ENCODE measurements at regions of chr17 and their contacts with region 1.

Region 1: GRCh38 chr17:43983515-43984411 is 20.7 kb upstream of the NAGS start:
- DNase-seq: peak; percentile 65
- ATAC-seq: peak; percentile 75
- H3K4me3 Mint-ChIP-seq: peak overlapping the region; percentile 69
- H3K27ac Mint-ChIP-seq: no peak overlapping the region
- H3K4me1 Mint-ChIP-seq: peaks cover 4% of the 10 kb centered on the region; the same call in 1 of the 2 replicates
- H3K27me3 Mint-ChIP-seq: peaks cover 24% of the 10 kb centered on the region
- CTCF ChIP-seq: peak; percentile 41; the same call in 1 of the 2 replicates

Region 2: DNA sequence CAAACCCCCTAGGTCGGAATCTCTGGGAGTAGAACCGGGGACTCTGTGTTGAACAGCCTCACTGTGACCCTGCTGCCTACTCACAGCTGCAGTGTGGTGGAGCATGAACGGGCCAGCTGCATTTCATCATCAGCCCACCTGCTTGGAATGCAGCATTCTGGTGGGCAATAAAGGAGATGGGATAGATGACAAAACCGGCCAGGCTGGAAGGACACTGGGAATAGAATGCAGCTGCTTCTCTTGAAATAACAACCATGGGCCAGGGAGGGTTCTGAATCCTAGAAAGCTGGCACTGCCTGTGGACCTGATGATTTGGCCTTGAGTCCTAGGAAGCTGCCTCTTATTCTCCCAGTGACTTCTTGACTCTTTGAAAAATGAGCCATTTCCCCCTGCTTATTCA is 180.0 kb before region 1 on chr17:
- CTCF ChIA-PET with region 1: no interaction called
- POLR2A ChIA-PET with region 1: no interaction called
- DNase-seq: peak; percentile 39
- ATAC-seq: peak; percentile 90
- H3K4me3 Mint-ChIP-seq: 0 out of 2 replicates have a peak overlapping the region, but pooled peaks have one; percentile 2
- H3K27ac Mint-ChIP-seq: peak overlapping the region; percentile 82
- H3K4me1 Mint-ChIP-seq: peaks cover 43% of the 10 kb centered on the region
- H3K27me3 Mint-ChIP-seq: no peaks in the 10 kb centered on the region
- CTCF ChIP-seq: no peak

Region 3: DNA sequence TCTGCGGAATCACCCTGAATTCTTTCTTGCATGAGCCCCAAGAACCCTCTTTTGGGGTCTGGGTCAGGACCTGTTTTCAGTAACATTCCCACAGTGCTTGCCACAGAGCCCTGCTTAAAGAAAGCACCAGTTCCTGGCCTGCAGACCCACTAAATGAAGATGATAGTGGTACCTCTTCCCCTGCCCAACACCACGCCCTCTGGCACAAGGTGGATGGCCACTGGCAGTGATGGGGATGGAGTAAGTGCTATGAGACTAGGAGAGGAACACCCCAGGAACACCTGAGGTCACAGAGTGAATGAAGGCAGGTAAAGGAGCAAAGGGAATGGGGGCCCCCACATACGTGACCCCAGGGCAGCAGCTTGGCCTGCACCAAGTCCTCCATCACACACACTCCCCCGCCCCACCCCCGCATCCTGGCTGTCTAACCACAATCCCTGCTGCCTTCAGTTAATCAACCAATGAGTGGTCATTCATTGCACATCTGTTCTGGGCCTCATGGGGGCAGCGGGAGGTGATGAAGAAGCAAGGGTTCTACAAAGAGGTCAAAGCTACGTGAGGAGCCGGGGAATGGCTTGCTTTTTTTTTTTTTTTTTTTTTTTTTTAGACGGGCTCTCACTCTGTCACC is 37.6 kb before region 1 on chr17:
- CTCF ChIA-PET with region 1: interaction called, 58 read pairs
- POLR2A ChIA-PET with region 1: interaction called, 4 read pairs
- DNase-seq: peak; percentile 66
- ATAC-seq: peak; percentile 55
- H3K4me3 Mint-ChIP-seq: no peak overlapping the region
- H3K27ac Mint-ChIP-seq: no peak overlapping the region
- H3K4me1 Mint-ChIP-seq: peaks cover 16% of the 10 kb centered on the region
- H3K27me3 Mint-ChIP-seq: peaks cover 12% of the 10 kb centered on the region
- CTCF ChIP-seq: no peak

Region 4: GRCh38 chr17:43958953-43959352 is 24.8 kb before region 1 on chr17:
- CTCF ChIA-PET with region 1: interaction called, 13 read pairs
- POLR2A ChIA-PET with region 1: interaction called, 3 read pairs
- DNase-seq: no peak
- ATAC-seq: no peak
- H3K4me3 Mint-ChIP-seq: no peak overlapping the region
- H3K27ac Mint-ChIP-seq: no peak overlapping the region
- H3K4me1 Mint-ChIP-seq: no peaks in the 10 kb centered on the region
- H3K27me3 Mint-ChIP-seq: peaks cover 18% of the 10 kb centered on the region
- CTCF ChIP-seq: no peak

Region 5: GRCh38 chr17:43994272-43995149 is 10.7 kb after region 1 on chr17:
- CTCF ChIA-PET with region 1: interaction called, 39 read pairs
- POLR2A ChIA-PET with region 1: interaction called, 4 read pairs
- DNase-seq: peak; percentile 85
- ATAC-seq: peak; percentile 86
- H3K4me3 Mint-ChIP-seq: peak overlapping the region; percentile 59
- H3K27ac Mint-ChIP-seq: no peak overlapping the region
- H3K4me1 Mint-ChIP-seq: peaks cover 8% of the 10 kb centered on the region
- H3K27me3 Mint-ChIP-seq: peaks cover 13% of the 10 kb centered on the region; the same call in 1 of the 2 replicates
- CTCF ChIP-seq: peak; percentile 92

Region 6: DNA sequence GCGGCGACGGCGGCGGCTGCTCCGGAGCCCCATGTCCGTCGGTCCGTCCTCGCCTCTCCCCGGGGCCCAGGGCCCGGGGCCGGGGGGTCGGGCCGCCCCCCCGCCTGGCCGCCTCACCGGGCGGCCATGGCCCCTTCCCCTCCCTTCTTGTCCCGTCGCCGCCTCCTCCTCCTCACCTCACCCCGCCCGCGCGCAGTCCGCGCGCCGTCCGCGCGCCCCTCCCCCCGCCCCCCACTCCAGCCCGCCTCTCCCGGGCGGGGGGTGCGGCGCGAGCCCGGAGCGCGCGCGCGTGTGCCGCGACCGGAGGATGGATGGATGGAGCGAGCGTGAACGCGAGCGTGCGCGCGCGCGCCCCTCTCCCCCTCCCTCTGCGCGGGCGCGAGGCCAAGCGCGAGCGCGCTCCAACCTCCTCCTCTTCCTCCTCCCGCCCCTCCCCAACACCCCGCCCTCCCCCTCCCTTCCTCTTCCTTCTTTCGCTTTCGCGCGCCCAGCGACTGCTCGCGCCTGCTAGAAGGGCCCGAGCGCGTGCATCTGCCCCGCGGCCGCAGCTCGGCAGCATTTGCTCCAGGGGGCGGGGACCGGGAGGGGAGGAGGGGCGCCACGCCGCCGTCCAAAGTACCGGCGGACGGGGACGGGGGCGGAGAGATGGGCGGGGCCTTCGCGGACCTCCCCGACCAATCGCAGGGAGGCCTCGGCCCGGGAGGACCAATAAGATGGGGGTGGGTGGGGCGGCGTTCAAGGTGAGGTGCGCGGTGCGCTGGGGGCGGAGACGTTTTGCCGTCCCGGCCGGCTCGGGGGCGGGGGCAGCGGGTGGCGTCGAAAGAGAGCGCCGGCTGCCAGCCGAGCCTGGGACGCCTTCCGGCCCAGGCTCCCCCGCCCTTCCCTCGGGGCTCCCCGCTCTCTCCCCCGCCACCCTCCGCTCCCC is 216.1 kb after region 1 on chr17 and contains the start of gene ATXN7L3:
- CTCF ChIA-PET with region 1: no interaction called
- POLR2A ChIA-PET with region 1: no interaction called
- DNase-seq: peak; percentile 100
- ATAC-seq: peak; percentile 87
- H3K4me3 Mint-ChIP-seq: peak within 1 kb of the TSS; percentile 85
- H3K27ac Mint-ChIP-seq: peak within 1 kb of the TSS; percentile 98
- H3K4me1 Mint-ChIP-seq: peaks cover 24% of the 10 kb centered on the region
- H3K27me3 Mint-ChIP-seq: no peaks in the 10 kb centered on the region
- CTCF ChIP-seq: no peak
- total RNA-seq, gene ATXN7L3: 113 to 124 TPM (median 114 TPM) in 3 replicates